ENCODE measurements at regions of chr4 and their contacts with region 1.

Region 1: GRCh38 chr4:121736735-121737351 is 28.1 kb downstream of the SMIM43 start:
- DNase-seq: peak; percentile 61
- ATAC-seq: peak; percentile 89
- H3K4me3 ChIP-seq: no peak overlapping the region
- H3K27ac ChIP-seq: no peak overlapping the region
- H3K4me1 ChIP-seq: no peaks in the 10 kb centered on the region
- H3K27me3 ChIP-seq: peaks cover 0 to 2% of the 10 kb centered on the region in 2 experiments; a peak in 1 of 5 replicates
- CTCF ChIP-seq: peak; percentile 78
- EP300 ChIP-seq: no peak
- POLR2A ChIP-seq: no peak
- RAD21 ChIP-seq: peak; percentile 44

Region 2: DNA sequence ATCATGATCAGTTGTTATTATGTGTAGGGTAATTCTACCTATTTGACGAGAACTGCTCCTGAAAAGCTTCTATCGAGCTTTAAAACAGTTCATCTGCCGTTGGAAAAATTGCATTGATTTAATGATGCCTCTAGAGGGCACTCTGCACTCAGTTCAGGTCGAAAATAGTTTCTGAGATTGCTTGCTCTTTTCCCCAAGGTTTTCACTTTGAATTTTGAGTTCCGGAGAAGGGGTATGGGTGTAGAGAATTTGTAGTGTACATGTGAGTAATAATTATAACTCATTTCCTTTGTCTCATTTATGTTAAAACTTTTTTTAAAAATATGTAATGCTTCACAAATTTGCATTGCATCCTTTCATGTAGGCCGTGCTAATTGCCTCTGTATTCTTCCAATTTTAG is 544.4 kb before region 1 on chr4:
- CTCF ChIA-PET with region 1: no interaction called
- POLR2A ChIA-PET with region 1: no interaction called
- in situ Hi-C with region 1: no loop called
- intact Hi-C with region 1: loop called (anchors 10 kb)
- DNase-seq: peak; percentile 16
- ATAC-seq: no peak
- H3K4me3 ChIP-seq: no peak overlapping the region
- H3K27ac ChIP-seq: no peak overlapping the region
- H3K4me1 ChIP-seq: no peaks in the 10 kb centered on the region
- H3K27me3 ChIP-seq: no peaks in the 10 kb centered on the region; a peak in 1 of 5 replicates
- CTCF ChIP-seq: peak; percentile 77
- EP300 ChIP-seq: no peak
- POLR2A ChIP-seq: no peak
- RAD21 ChIP-seq: peak; percentile 32; the same call in 1 of the 2 replicates

Region 3: GRCh38 chr4:121370729-121371325 is 366.0 kb before region 1 on chr4:
- CTCF ChIA-PET with region 1: interaction called, 8 read pairs
- POLR2A ChIA-PET with region 1: no interaction called
- in situ Hi-C with region 1: loop called (anchors 10 kb)
- intact Hi-C with region 1: loop called (anchors 1 kb)
- DNase-seq: peak; percentile 17
- ATAC-seq: peak; percentile 37; the same call in 1 of the 3 replicates
- H3K4me3 ChIP-seq: no peak overlapping the region
- H3K27ac ChIP-seq: no peak overlapping the region
- H3K4me1 ChIP-seq: no peaks in the 10 kb centered on the region
- H3K27me3 ChIP-seq: no peaks in the 10 kb centered on the region
- CTCF ChIP-seq: peak; percentile 47
- EP300 ChIP-seq: no peak
- POLR2A ChIP-seq: no peak
- RAD21 ChIP-seq: no peak

Region 4: DNA sequence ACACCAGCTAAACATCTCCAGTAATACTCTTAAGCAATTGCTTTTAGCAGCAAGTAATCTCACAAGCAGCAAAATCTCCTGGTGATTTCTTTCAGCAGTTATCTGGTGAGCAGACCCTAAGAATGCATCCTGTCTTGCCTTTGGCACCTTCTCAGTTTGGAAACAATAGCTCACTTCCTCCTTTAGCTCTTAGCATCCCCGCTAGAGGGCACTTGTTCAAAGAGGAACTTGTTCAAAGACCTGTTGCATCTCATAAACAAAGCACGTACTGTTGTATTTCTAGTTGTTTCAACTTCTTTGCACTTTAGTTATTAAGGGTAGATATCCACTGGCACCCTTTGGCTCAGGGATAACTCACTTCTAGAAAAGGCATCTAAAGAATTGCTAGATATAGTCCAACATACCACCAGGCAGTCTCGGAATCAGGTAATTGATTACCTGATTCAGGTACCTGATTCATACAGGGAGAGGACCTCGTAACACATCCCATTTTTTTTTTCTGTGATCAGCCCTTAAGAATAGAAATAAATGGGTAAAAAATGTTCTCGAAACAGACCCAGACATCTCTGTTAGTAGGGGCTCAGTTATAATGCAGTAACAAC is 274.1 kb before region 1 on chr4:
- CTCF ChIA-PET with region 1: interaction called, 3 read pairs
- POLR2A ChIA-PET with region 1: no interaction called
- in situ Hi-C with region 1: loop called (anchors 5 kb)
- intact Hi-C with region 1: loop called (anchors 1 kb)
- DNase-seq: peak; percentile 57
- ATAC-seq: peak; percentile 80
- H3K4me3 ChIP-seq: no peak overlapping the region
- H3K27ac ChIP-seq: no peak overlapping the region
- H3K4me1 ChIP-seq: no peaks in the 10 kb centered on the region
- H3K27me3 ChIP-seq: no peaks in the 10 kb centered on the region
- CTCF ChIP-seq: peak; percentile 71
- EP300 ChIP-seq: no peak
- POLR2A ChIP-seq: no peak
- RAD21 ChIP-seq: no peak

Region 5: DNA sequence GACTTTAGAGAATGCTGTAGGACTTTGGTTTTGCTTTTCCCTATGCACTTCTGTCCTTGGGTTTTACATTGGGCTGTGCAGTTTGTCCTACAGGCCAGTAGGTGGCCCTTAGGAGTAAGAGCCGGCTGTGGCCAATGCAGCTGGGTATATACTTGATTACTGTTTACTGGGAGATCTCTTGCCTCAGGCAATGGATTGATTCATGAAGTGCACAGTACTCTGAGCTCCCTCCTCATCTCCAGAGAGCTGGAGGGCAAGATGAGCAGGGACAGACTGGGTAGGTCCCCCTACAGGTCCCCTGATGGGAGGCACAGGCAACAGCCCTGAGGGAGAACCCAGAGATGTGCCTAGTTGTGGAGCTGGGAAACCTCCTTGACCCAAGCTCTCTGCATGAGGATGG is 252.2 kb before region 1 on chr4:
- CTCF ChIA-PET with region 1: interaction called, 12 read pairs
- POLR2A ChIA-PET with region 1: no interaction called
- in situ Hi-C with region 1: no loop called
- intact Hi-C with region 1: loop called (anchors 1 kb)
- DNase-seq: peak; percentile 36
- ATAC-seq: peak; percentile 98
- H3K4me3 ChIP-seq: no peak overlapping the region
- H3K27ac ChIP-seq: no peak overlapping the region
- H3K4me1 ChIP-seq: no peaks in the 10 kb centered on the region
- H3K27me3 ChIP-seq: no peaks in the 10 kb centered on the region; a peak in 1 of 5 replicates
- CTCF ChIP-seq: peak; percentile 74
- EP300 ChIP-seq: no peak
- POLR2A ChIP-seq: no peak
- RAD21 ChIP-seq: peak; percentile 27; the same call in 1 of the 2 replicates

Measured in HepG2 (cell line).